Activated B cell treated with CpG ODN at 0.5 μM for 24 hours (primary cell): ENCODE measurements at regions of chr11 and their contacts with region 1.

Region 1: GRCh38 chr11:125141686-125142535 is 22.6 kb upstream of the PKNOX2 start:
- DNase-seq: peak; percentile 65
- ATAC-seq: peak; percentile 98
- H3K4me3 Mint-ChIP-seq: no peak overlapping the region
- H3K27ac Mint-ChIP-seq: no peak overlapping the region
- H3K4me1 Mint-ChIP-seq: peaks cover 2% of the 10 kb centered on the region
- H3K27me3 Mint-ChIP-seq: peaks cover 38% of the 10 kb centered on the region
- CTCF ChIP-seq: peak; percentile 48

Region 2: GRCh38 chr11:124875943-124876817 is 265.7 kb before region 1 on chr11:
- CTCF ChIA-PET with region 1: interaction called, 4 read pairs
- POLR2A ChIA-PET with region 1: no interaction called
- intact Hi-C with region 1: loop called (anchors 2 kb)
- DNase-seq: peak; percentile 67
- ATAC-seq: peak; percentile 96
- H3K4me3 Mint-ChIP-seq: peak overlapping the region; percentile 85
- H3K27ac Mint-ChIP-seq: no peak overlapping the region
- H3K4me1 Mint-ChIP-seq: peaks cover 18% of the 10 kb centered on the region
- H3K27me3 Mint-ChIP-seq: peaks cover 69% of the 10 kb centered on the region
- CTCF ChIP-seq: peak; percentile 45

Region 3: GRCh38 chr11:124970925-124971324 is 171.0 kb before region 1 on chr11:
- CTCF ChIA-PET with region 1: interaction called, 27 read pairs
- POLR2A ChIA-PET with region 1: no interaction called
- intact Hi-C with region 1: no loop called
- DNase-seq: no peak
- ATAC-seq: no peak
- H3K4me3 Mint-ChIP-seq: no peak overlapping the region
- H3K27ac Mint-ChIP-seq: no peak overlapping the region
- H3K4me1 Mint-ChIP-seq: no peaks in the 10 kb centered on the region
- H3K27me3 Mint-ChIP-seq: no peaks in the 10 kb centered on the region
- CTCF ChIP-seq: no peak

Region 4: DNA sequence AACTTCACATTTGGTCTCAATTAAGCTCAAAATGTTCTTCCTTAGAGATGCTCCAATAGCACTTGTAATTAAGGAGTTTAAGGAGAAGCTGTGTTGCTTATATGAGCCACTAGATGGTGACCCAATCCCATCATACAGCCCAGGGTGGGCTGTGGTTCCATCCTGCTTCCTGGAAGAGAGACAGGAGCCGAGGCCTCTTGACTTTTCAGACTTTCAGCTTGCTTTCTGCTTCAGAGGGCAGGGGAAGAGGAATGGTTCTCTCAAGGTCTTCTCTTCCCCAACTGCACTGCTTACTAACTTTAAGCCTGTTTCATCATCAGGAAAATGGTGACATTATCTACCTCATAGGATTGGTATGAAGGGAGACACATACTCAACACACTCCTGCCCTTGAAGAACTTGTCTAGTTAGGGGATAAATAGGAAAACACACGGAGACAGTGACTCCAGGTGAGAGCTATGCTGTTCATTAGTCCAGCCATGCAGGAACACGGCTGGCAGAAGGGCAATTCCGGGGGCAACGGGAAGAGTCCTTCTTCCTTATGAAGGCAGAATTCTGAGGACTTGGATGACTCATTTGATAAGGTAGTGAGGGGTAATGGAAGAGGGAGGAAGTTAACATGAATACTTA is 50.5 kb before region 1 on chr11:
- CTCF ChIA-PET with region 1: interaction called, 29 read pairs
- POLR2A ChIA-PET with region 1: no interaction called
- intact Hi-C with region 1: loop called (anchors 1 kb)
- DNase-seq: no peak
- ATAC-seq: peak; percentile 37
- H3K4me3 Mint-ChIP-seq: no peak overlapping the region
- H3K27ac Mint-ChIP-seq: no peak overlapping the region
- H3K4me1 Mint-ChIP-seq: peaks cover 2% of the 10 kb centered on the region
- H3K27me3 Mint-ChIP-seq: no peaks in the 10 kb centered on the region
- CTCF ChIP-seq: no peak

Region 5: GRCh38 chr11:125123947-125124617 is 17.8 kb before region 1 on chr11:
- CTCF ChIA-PET with region 1: interaction called, 23 read pairs
- POLR2A ChIA-PET with region 1: no interaction called
- intact Hi-C with region 1: no loop called
- DNase-seq: no peak
- ATAC-seq: peak; percentile 71
- H3K4me3 Mint-ChIP-seq: peak overlapping the region; percentile 26
- H3K27ac Mint-ChIP-seq: no peak overlapping the region
- H3K4me1 Mint-ChIP-seq: peaks cover 14% of the 10 kb centered on the region
- H3K27me3 Mint-ChIP-seq: peaks cover 32% of the 10 kb centered on the region
- CTCF ChIP-seq: no peak

Region 6: GRCh38 chr11:125313271-125314219 is 171.6 kb after region 1 on chr11:
- CTCF ChIA-PET with region 1: no interaction called
- POLR2A ChIA-PET with region 1: no interaction called
- intact Hi-C with region 1: no loop called
- DNase-seq: no peak
- ATAC-seq: no peak
- H3K4me3 Mint-ChIP-seq: no peak overlapping the region
- H3K27ac Mint-ChIP-seq: no peak overlapping the region
- H3K4me1 Mint-ChIP-seq: no peaks in the 10 kb centered on the region
- H3K27me3 Mint-ChIP-seq: peaks cover 9% of the 10 kb centered on the region
- CTCF ChIP-seq: no peak